CD8-positive, alpha-beta T cell (primary cell): ENCODE measurements at regions of chr21 and their contacts with region 1.

Region 1: GRCh38 chr21:20396798-20397197 is 601.4 kb upstream of the NCAM2 start:
- DNase-seq: no peak
- ATAC-seq: no peak
- H3K4me3 ChIP-seq: no peak overlapping the region
- H3K4me3 Mint-ChIP-seq: no peak overlapping the region
- H3K27ac ChIP-seq: no peak overlapping the region
- H3K27ac Mint-ChIP-seq: no peak overlapping the region
- H3K4me1 ChIP-seq: no peaks in the 10 kb centered on the region
- H3K4me1 Mint-ChIP-seq: no peaks in the 10 kb centered on the region
- H3K27me3 ChIP-seq: no peaks in the 10 kb centered on the region
- H3K27me3 Mint-ChIP-seq: no peaks in the 10 kb centered on the region
- CTCF ChIP-seq: no peak

Region 2: GRCh38 chr21:21722731-21723130 is 1325.9 kb after region 1 on chr21:
- CTCF ChIA-PET with region 1: no interaction called
- POLR2A ChIA-PET with region 1: no interaction called
- intact Hi-C with region 1: loop called in 1 of 2 experiments (anchors 5 kb)
- DNase-seq: no peak
- ATAC-seq: no peak
- H3K4me3 ChIP-seq: no peak overlapping the region
- H3K4me3 Mint-ChIP-seq: no peak overlapping the region
- H3K27ac ChIP-seq: no peak overlapping the region
- H3K27ac Mint-ChIP-seq: no peak overlapping the region
- H3K4me1 ChIP-seq: no peaks in the 10 kb centered on the region
- H3K4me1 Mint-ChIP-seq: no peaks in the 10 kb centered on the region
- H3K27me3 ChIP-seq: no peaks in the 10 kb centered on the region
- H3K27me3 Mint-ChIP-seq: no peaks in the 10 kb centered on the region
- CTCF ChIP-seq: no peak